GM12878 (cell line): ENCODE measurements at regions of chr3 and their contacts with region 1.

Region 1: GRCh38 chr3:129428376-129429079 is at the start of gene EFCAB12:
- DNase-seq: no peak
- ATAC-seq: peak; percentile 86
- H3K4me3 ChIP-seq: peak within 1 kb of the TSS; percentile 50; the same call in 1 of the 2 replicates
- H3K27ac ChIP-seq: no peak within 1 kb of the TSS; the same call in 1 of the 2 replicates
- H3K4me1 ChIP-seq: peaks cover 26% of the 10 kb centered on the region
- H3K27me3 ChIP-seq: no peaks in the 10 kb centered on the region
- CTCF ChIP-seq: no peak
- EP300 ChIP-seq: no peak
- POLR2A ChIP-seq: peak; percentile 78
- RAD21 ChIP-seq: no peak
- polyA plus RNA-seq, gene EFCAB12: 0.02 to 0.03 TPM

Region 2: DNA sequence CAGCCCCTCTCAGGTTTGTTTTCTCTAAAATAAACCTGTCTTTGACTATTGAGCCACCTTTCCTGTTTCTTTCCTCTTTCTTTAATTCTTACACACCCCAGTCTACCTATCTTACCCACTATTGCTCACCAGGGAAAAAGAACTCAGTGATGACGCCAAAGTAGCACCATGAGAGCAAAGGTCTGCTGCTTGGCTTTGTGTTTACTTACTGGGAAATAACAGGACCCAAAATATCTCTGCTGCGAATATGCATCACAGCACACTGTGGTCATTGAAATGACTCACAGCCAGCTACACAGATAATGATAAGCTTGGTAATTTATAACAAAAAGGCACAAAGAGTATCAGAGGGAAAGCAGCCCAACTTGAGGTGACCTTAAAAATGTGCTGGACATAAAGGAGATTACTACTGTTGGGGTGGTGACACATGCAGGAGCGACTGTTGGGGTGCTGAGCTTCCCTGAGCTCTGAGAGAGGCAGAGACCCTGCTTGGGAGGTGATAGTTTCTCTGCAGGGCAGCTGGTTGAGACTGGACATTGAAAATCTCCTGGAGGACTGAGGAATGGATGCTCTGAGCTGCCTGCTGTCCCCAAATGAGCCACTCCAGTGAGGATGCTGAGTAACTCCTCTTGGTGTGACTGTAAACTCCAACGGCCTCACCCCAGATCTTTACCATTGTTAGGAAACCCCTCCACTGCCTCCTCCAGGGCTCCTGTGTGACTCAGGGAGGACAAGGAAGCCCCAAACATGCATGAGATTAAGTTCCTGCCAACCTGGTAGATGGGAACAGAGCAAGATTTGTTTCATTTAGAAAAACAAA is 14.6 kb before region 1 on chr3:
- CTCF ChIA-PET with region 1: interaction called, 29 read pairs
- POLR2A ChIA-PET with region 1: interaction called, 24 read pairs
- RAD21 ChIA-PET with region 1: interaction called, 32 read pairs
- SMC1A ChIA-PET with region 1: interaction called, 275 read pairs
- in situ Hi-C with region 1: no loop called
- intact Hi-C with region 1: no loop called
- DNase-seq: no peak
- ATAC-seq: peak; percentile 96
- H3K4me3 ChIP-seq: no peak overlapping the region
- H3K27ac ChIP-seq: no peak overlapping the region
- H3K4me1 ChIP-seq: peaks cover 6% of the 10 kb centered on the region
- H3K27me3 ChIP-seq: no peaks in the 10 kb centered on the region
- CTCF ChIP-seq: no peak
- EP300 ChIP-seq: peak; percentile 79 to 82; a peak in 2 of 4 replicates
- POLR2A ChIP-seq: no peak
- RAD21 ChIP-seq: no peak